CD8-positive, alpha-beta T cell (primary cell): ENCODE measurements at regions of chr4 and their contacts with region 1.

Region 1: DNA sequence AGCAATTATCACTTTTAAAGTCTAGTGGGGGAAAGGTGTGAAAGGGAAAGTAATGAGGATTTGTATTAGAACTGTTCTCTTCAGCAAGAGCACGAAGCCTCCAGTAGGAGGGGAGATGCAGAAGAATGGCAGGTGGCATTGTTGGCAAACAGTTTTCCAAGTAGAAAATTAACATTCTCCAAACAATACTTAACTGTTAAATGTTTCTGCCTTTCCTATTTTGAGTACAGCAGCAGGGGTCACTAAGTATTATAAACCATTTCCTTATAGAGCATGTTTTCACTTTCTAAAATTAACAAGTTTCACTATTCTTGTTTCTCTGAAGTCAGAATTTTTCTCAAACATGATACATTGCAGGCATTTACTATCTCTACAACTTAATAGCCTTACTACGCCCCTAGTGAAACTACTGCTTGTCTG is 58.7 kb downstream of the LEF1 start:
- DNase-seq: no peak
- ATAC-seq: no peak
- H3K4me3 ChIP-seq: peak overlapping the region in 1 of 2 experiments; percentile 7
- H3K4me3 Mint-ChIP-seq: peak overlapping the region; percentile 61
- H3K27ac ChIP-seq: peak overlapping the region; percentile 6 to 19
- H3K27ac Mint-ChIP-seq: peak overlapping the region; percentile 98
- H3K4me1 ChIP-seq: peaks cover 98% of the 10 kb centered on the region
- H3K4me1 Mint-ChIP-seq: peaks cover 86% of the 10 kb centered on the region
- H3K27me3 ChIP-seq: no peaks in the 10 kb centered on the region
- H3K27me3 Mint-ChIP-seq: no peaks in the 10 kb centered on the region
- CTCF ChIP-seq: no peak

Region 2: GRCh38 chr4:107970063-107970798 is 139.8 kb before region 1 on chr4:
- CTCF ChIA-PET with region 1: no interaction called
- POLR2A ChIA-PET with region 1: no interaction called
- intact Hi-C with region 1: no loop called
- DNase-seq: no peak
- ATAC-seq: no peak
- H3K4me3 ChIP-seq: no peak overlapping the region
- H3K4me3 Mint-ChIP-seq: no peak overlapping the region
- H3K27ac ChIP-seq: no peak overlapping the region
- H3K27ac Mint-ChIP-seq: no peak overlapping the region
- H3K4me1 ChIP-seq: no peaks in the 10 kb centered on the region
- H3K4me1 Mint-ChIP-seq: peaks cover 3% of the 10 kb centered on the region
- H3K27me3 ChIP-seq: no peaks in the 10 kb centered on the region
- H3K27me3 Mint-ChIP-seq: peaks cover 4% of the 10 kb centered on the region
- CTCF ChIP-seq: no peak

Region 3: GRCh38 chr4:108080747-108081146 is 29.3 kb before region 1 on chr4:
- CTCF ChIA-PET with region 1: interaction called, 3 read pairs
- POLR2A ChIA-PET with region 1: interaction called, 18 read pairs
- intact Hi-C with region 1: loop called in 1 of 2 experiments (anchors 2 kb)
- DNase-seq: peak; percentile 23 to 86 (median 67)
- ATAC-seq: peak; percentile 85
- H3K4me3 ChIP-seq: peak overlapping the region; percentile 3 to 6
- H3K4me3 Mint-ChIP-seq: peak overlapping the region; percentile 72
- H3K27ac ChIP-seq: peak overlapping the region; percentile 39 to 60
- H3K27ac Mint-ChIP-seq: peak overlapping the region; percentile 99
- H3K4me1 ChIP-seq: peaks cover 75% of the 10 kb centered on the region
- H3K4me1 Mint-ChIP-seq: peaks cover 67% of the 10 kb centered on the region
- H3K27me3 ChIP-seq: no peaks in the 10 kb centered on the region
- H3K27me3 Mint-ChIP-seq: no peaks in the 10 kb centered on the region
- CTCF ChIP-seq: no peak

Region 4: GRCh38 chr4:108126806-108127205 is 16.8 kb after region 1 on chr4:
- CTCF ChIA-PET with region 1: interaction called, 4 read pairs
- POLR2A ChIA-PET with region 1: interaction called, 17 read pairs
- intact Hi-C with region 1: loop called in 1 of 2 experiments (anchors 2 kb)
- DNase-seq: no peak
- ATAC-seq: peak; percentile 30
- H3K4me3 ChIP-seq: no peak overlapping the region
- H3K4me3 Mint-ChIP-seq: peak overlapping the region; percentile 46
- H3K27ac ChIP-seq: no peak overlapping the region
- H3K27ac Mint-ChIP-seq: peak overlapping the region; percentile 91
- H3K4me1 ChIP-seq: peaks cover 90% of the 10 kb centered on the region
- H3K4me1 Mint-ChIP-seq: peaks cover 83% of the 10 kb centered on the region
- H3K27me3 ChIP-seq: no peaks in the 10 kb centered on the region
- H3K27me3 Mint-ChIP-seq: no peaks in the 10 kb centered on the region
- CTCF ChIP-seq: no peak

Region 5: GRCh38 chr4:108160741-108161352 is 50.8 kb after region 1 on chr4:
- CTCF ChIA-PET with region 1: interaction called, 3 read pairs
- POLR2A ChIA-PET with region 1: interaction called, 34 read pairs
- intact Hi-C with region 1: loop called (anchors 2 to 5 kb)
- DNase-seq: peak in 2 of 9 experiments; percentile 40 to 65
- ATAC-seq: peak; percentile 40
- H3K4me3 ChIP-seq: peak overlapping the region; percentile 73 to 78
- H3K4me3 Mint-ChIP-seq: peak overlapping the region; percentile 83
- H3K27ac ChIP-seq: peak overlapping the region in 1 of 2 experiments; percentile 28
- H3K27ac Mint-ChIP-seq: peak overlapping the region; percentile 91
- H3K4me1 ChIP-seq: peaks cover 37% of the 10 kb centered on the region
- H3K4me1 Mint-ChIP-seq: peaks cover 71% of the 10 kb centered on the region
- H3K27me3 ChIP-seq: peaks cover 0 to 8% of the 10 kb centered on the region in 2 experiments
- H3K27me3 Mint-ChIP-seq: no peaks in the 10 kb centered on the region
- CTCF ChIP-seq: no peak